ENCODE measurements at regions of chr12 and their contacts with region 1.

Region 1: DNA sequence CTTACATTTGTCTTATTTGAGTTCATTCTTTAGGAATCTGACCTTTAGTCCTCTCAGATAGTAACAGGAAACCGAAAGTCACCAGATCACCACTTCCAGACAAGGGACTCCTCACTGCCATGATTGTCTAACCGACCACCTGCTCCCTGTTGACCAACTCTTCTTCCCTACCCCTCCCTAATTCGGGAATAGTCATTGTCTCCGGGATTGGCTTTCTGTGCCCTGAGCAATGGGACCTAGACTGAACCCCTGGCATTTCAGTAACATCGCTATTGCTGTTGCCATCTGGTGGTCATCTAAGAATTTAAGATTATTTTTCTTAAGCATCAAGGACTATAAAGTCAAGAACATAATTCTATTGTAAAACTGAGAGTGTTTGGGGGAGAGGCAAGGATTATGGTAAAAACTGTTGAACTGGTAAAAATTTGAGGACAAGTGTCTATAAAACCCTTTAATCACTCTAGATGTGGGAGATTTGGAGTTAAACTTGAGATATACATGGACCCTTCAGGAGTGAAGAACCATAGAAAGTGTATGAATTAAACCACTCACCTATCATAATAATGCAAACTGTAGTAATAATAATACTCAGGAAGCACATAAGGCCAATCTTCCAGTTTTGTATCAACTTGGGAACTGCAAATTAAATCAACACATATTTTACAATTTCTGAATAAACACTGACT is 6.3 kb downstream of the CLEC2A start:
- DNase-seq: no peak
- ATAC-seq: peak; percentile 30 to 61
- H3K4me3 ChIP-seq: peak overlapping the region in 2 of 4 donors; percentile 12 to 30
- H3K27ac ChIP-seq: no peak overlapping the region
- H3K4me1 ChIP-seq: no peaks in the 10 kb centered on the region
- H3K27me3 ChIP-seq: no peaks in the 10 kb centered on the region
- CTCF ChIP-seq: peak; percentile 32 to 50 (median 48)
- POLR2A ChIP-seq: no peak

Region 2: GRCh38 chr12:9741726-9742125 is 184.1 kb before region 1 on chr12:
- in situ Hi-C with region 1: loop called (anchors 5 to 10 kb)
- intact Hi-C with region 1: no loop called
- DNase-seq: no peak
- ATAC-seq: no peak
- H3K4me3 ChIP-seq: no peak overlapping the region
- H3K27ac ChIP-seq: no peak overlapping the region
- H3K4me1 ChIP-seq: peaks cover 0 to 6% of the 10 kb centered on the region in 2 donors
- H3K27me3 ChIP-seq: no peaks in the 10 kb centered on the region
- CTCF ChIP-seq: no peak
- POLR2A ChIP-seq: no peak

Region 3: GRCh38 chr12:9749640-9750039 is 176.2 kb before region 1 on chr12:
- in situ Hi-C with region 1: loop called (anchors 5 to 10 kb)
- intact Hi-C with region 1: loop called (anchors 1 kb)
- DNase-seq: no peak
- ATAC-seq: no peak
- H3K4me3 ChIP-seq: no peak overlapping the region
- H3K27ac ChIP-seq: no peak overlapping the region
- H3K4me1 ChIP-seq: peaks cover 0 to 5% of the 10 kb centered on the region in 2 donors
- H3K27me3 ChIP-seq: no peaks in the 10 kb centered on the region
- CTCF ChIP-seq: no peak
- POLR2A ChIP-seq: no peak

Region 4: DNA sequence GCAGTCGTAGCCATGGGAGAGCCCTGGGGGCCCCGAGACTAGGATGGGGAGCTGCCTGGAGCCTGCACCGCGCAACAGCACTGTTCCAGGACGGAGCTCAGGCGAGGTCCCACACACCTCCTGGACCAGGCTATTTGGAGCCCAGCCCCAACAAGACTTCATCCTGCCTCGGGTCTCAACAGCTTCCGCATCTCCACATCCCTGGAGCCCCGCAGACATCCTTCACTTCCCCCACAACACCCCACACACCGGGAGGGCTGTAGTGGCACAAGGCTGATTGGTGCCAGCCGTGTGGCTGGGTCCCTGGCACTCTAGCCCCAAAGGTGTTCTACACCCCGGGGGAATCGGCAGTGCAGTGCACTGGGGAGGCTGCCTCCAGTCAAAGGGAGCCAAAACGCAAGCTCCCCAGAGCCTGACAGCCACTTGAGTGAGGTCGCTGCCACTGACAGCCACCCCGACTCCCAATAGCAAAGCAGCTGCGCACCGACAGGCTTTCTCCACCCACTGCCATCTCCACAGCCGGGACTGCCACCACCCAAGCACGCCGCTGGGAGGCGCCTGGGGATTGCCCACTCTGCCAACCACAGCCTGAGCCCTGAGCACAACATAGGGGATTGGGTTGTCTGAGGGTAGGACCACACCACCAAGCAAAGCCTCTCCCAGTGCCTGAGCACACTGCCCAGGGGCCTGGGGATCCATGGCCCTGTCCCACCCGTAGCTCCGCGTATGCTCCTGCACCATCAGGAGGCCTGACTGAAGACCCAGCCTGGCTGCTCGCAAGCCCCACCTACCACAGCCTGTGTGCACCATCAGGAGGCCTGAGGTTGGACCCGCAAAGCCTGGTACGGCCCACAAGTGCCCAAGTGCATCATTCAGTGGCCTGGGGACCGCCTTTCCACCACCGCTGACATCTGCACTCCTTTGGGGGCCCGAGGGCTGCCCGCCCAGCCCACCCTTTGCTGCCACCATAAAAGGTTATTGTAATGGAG is 111.7 kb before region 1 on chr12:
- in situ Hi-C with region 1: loop called in 2 of 4 experiments (anchors 10 kb)
- intact Hi-C with region 1: loop called (anchors 1 kb)
- DNase-seq: peak; percentile 24 to 51
- ATAC-seq: peak in 1 of 2 donors; percentile 39
- H3K4me3 ChIP-seq: no peak overlapping the region
- H3K27ac ChIP-seq: no peak overlapping the region
- H3K4me1 ChIP-seq: no peaks in the 10 kb centered on the region
- H3K27me3 ChIP-seq: no peaks in the 10 kb centered on the region
- CTCF ChIP-seq: peak; percentile 14 to 63 (median 46)
- POLR2A ChIP-seq: no peak

Measured in gastrocnemius medialis (tissue), 4 donors.